Common myeloid progenitor, CD34-positive (primary cell): ENCODE measurements at regions of chr14 and their contacts with region 1.

Region 1: DNA sequence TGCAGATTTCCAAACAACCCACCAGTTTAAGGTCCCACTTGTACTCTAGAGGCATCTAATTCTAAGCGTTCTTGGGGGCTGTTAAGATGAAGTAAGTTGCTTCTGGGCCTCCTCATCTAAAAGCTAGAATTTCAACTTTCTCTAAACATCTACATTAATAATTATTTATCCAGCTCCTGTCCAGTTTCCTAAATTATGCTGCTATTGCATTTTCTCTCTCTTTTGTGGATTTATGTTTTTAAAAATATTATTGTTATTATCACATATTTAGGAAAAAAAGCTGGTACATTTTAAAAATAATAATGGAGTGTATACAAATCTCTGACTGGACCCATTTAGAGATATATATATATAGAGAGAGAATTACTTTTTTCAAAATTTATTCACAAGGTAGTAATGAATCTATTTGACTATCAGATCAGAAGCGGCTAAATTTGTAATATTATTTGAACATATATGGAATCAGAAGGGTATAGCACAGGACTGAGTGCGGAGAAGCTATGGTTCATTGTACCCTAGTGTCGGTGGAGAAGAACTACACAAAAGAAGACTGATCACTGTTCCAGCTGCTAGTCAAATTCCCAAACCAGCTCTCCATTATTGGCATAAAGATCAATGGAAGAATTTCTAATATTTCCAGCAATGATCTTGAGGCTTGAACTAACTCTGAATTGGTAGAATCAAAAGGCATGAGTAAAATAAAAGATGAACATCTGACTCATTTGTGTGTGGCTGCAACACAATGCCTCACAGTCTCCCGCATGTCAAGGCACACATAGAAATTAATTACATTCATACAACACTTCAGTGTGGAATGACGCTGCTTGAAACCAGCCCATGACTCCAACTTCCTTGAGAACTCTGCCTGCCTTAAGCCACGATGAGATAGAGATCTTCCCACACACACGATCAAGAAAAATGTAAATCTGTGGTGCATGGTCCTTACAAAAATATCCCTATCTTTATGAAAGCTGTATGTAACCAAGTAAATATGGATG is 433.4 kb upstream of the OR4E1 start:
- DNase-seq: peak in 2 of 3 donors; percentile 47 to 62
- H3K4me3 ChIP-seq: no peak overlapping the region
- H3K27ac ChIP-seq: no peak overlapping the region
- H3K4me1 ChIP-seq: peaks cover 3 to 14% (median 6%) of the 10 kb centered on the region in 4 experiments
- H3K27me3 ChIP-seq: no peaks in the 10 kb centered on the region

Region 2: GRCh38 chr14:21882226-21882625 is 224.8 kb before region 1 on chr14:
- CTCF ChIA-PET with region 1: no interaction called
- POLR2A ChIA-PET with region 1: no interaction called
- DNase-seq: no peak
- H3K4me3 ChIP-seq: no peak overlapping the region
- H3K27ac ChIP-seq: no peak overlapping the region
- H3K4me1 ChIP-seq: peaks cover 0 to 2% (median 0%) of the 10 kb centered on the region in 4 experiments
- H3K27me3 ChIP-seq: no peaks in the 10 kb centered on the region

Region 3: GRCh38 chr14:22047115-22047514 is 59.9 kb before region 1 on chr14:
- CTCF ChIA-PET with region 1: interaction called, 80 read pairs
- POLR2A ChIA-PET with region 1: no interaction called
- DNase-seq: peak; percentile 64 to 81 (median 78)
- H3K4me3 ChIP-seq: peak overlapping the region in 1 of 7 experiments; percentile 29
- H3K27ac ChIP-seq: no peak overlapping the region
- H3K4me1 ChIP-seq: peaks cover 4 to 33% (median 14%) of the 10 kb centered on the region in 4 experiments
- H3K27me3 ChIP-seq: no peaks in the 10 kb centered on the region

Region 4: DNA sequence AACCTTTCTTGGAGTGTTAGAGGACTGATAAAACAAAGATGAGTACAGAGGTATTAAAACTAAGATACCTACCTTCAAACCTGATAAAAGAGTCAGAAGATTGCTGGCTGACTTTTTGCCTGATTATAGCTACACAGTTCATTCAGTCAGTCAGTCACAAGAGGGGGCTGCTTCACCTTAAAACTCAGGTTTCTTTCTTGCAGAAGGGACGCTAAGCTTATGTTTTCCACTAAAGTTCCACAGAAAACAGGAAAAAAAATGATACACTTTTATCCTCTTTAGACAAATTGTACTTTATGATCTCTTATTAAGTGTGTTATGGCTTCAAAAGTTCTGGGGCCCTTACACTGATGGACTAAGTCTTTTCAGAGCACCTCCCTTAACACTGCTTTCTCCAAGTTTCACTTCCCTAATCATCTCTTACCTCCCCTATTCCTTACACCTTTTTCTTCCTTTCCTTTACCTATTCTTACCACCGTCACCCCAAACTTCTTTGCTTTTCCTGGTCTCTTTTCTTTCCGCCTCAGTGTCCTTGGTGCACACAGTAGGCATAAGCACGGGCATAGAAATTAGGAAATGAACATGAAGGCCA is 15.3 kb after region 1 on chr14:
- CTCF ChIA-PET with region 1: interaction called, 11 read pairs
- POLR2A ChIA-PET with region 1: no interaction called
- DNase-seq: peak; percentile 26 to 54 (median 45)
- H3K4me3 ChIP-seq: peak overlapping the region in 1 of 7 experiments; percentile 17
- H3K27ac ChIP-seq: no peak overlapping the region
- H3K4me1 ChIP-seq: peaks cover 0 to 3% (median 0%) of the 10 kb centered on the region in 4 experiments
- H3K27me3 ChIP-seq: no peaks in the 10 kb centered on the region

Region 5: GRCh38 chr14:22163051-22163450 is 56.1 kb after region 1 on chr14:
- CTCF ChIA-PET with region 1: no interaction called
- POLR2A ChIA-PET with region 1: no interaction called
- DNase-seq: peak; percentile 46 to 66 (median 60)
- H3K4me3 ChIP-seq: no peak overlapping the region
- H3K27ac ChIP-seq: no peak overlapping the region
- H3K4me1 ChIP-seq: peaks cover 12 to 26% (median 16%) of the 10 kb centered on the region in 4 experiments
- H3K27me3 ChIP-seq: peaks cover 0 to 13% (median 3%) of the 10 kb centered on the region in 5 experiments

Region 6: DNA sequence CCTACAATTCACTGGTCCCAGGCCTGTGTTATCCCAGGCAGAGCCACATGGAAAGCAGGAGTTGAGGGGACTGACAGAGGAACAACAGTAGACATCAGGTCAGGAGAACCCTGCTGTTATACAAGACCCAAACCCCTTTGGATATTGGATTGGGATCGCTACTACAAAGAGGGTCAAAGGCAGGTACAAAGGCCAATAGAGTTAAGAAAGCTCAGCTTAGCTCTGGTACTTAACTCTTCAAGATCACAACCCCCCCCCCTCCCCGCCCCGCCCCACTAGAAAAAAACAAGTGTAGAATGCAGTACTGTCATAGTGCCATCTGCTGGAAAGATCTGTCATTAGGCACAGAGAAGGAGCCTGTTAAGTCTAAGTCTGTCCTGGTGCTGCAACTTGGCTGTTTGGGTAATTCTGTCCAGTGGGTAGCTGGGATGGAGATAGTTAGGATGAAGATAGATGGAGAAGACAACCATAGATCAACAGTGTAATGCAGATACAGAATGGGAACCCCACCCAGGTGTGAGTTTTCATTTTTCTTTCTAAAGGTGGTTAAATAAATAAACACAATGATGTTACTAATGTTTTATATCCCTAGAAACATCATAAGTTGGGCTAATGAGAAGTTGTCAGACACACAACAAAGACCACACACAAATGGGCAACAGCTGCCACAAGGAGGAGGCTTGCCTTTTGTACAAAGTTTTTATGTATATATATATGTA is 793.2 kb after region 1 on chr14:
- CTCF ChIA-PET with region 1: no interaction called
- POLR2A ChIA-PET with region 1: no interaction called
- DNase-seq: peak; percentile 72 to 84 (median 79)
- H3K4me3 ChIP-seq: no peak overlapping the region
- H3K27ac ChIP-seq: no peak overlapping the region
- H3K4me1 ChIP-seq: no peaks in the 10 kb centered on the region
- H3K27me3 ChIP-seq: peaks cover 0 to 2% (median 0%) of the 10 kb centered on the region in 5 experiments